CD8-positive, alpha-beta T cell (primary cell): ENCODE measurements at regions of chr7 and their contacts with region 1.

Region 1: DNA sequence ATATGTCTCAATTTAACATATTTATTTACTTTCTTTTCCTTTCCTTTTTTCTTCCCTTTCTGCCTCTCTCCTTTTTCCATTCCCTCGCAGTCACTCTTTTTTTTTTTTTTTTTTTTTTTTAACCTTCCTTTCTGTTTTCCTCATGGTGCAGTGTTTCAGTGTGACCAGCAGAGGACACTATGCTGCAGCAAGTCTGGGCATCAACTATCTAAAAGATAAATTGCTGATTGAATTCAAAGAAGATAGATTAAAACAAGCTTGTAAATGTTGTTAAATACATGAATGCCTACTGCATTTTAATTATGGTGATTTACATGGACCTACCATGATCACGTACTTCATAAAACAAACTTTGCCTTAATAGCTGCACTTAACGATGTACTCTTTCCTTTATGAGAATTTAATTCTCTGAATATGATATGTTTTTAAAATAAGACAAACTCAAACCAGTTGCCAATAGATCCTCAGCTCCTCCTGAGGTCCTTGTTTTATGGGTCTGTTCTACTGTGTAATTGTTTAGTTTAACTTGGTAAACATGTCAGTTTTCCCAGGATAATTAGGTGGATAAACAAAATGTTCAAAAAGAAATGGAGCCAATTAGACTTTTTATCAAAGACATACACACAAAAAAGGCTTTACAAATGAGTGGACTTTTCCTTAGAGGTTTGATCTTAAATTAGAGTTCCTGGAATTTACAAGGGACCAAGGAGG is 101.0 kb upstream of the AGR3 start:
- DNase-seq: peak in 4 of 9 experiments; percentile 6 to 65 (median 36)
- ATAC-seq: peak; percentile 69
- H3K4me3 ChIP-seq: no peak overlapping the region
- H3K4me3 Mint-ChIP-seq: no peak overlapping the region
- H3K27ac ChIP-seq: no peak overlapping the region
- H3K27ac Mint-ChIP-seq: no peak overlapping the region
- H3K4me1 ChIP-seq: no peaks in the 10 kb centered on the region
- H3K4me1 Mint-ChIP-seq: peaks cover 2% of the 10 kb centered on the region
- H3K27me3 ChIP-seq: peaks cover 0 to 2% of the 10 kb centered on the region in 2 experiments
- H3K27me3 Mint-ChIP-seq: peaks cover 11% of the 10 kb centered on the region
- CTCF ChIP-seq: peak; percentile 99

Region 2: GRCh38 chr7:17041324-17041723 is 58.5 kb after region 1 on chr7:
- CTCF ChIA-PET with region 1: no interaction called
- POLR2A ChIA-PET with region 1: no interaction called
- intact Hi-C with region 1: no loop called
- DNase-seq: peak in 2 of 9 experiments; percentile 6 to 13
- ATAC-seq: no peak
- H3K4me3 ChIP-seq: no peak overlapping the region
- H3K4me3 Mint-ChIP-seq: no peak overlapping the region
- H3K27ac ChIP-seq: no peak overlapping the region
- H3K27ac Mint-ChIP-seq: no peak overlapping the region
- H3K4me1 ChIP-seq: no peaks in the 10 kb centered on the region
- H3K4me1 Mint-ChIP-seq: peaks cover 8% of the 10 kb centered on the region
- H3K27me3 ChIP-seq: no peaks in the 10 kb centered on the region
- H3K27me3 Mint-ChIP-seq: peaks cover 2% of the 10 kb centered on the region
- CTCF ChIP-seq: no peak

Region 3: GRCh38 chr7:17530741-17531417 is 548.1 kb after region 1 on chr7:
- CTCF ChIA-PET with region 1: interaction called, 3 read pairs
- POLR2A ChIA-PET with region 1: no interaction called
- intact Hi-C with region 1: loop called (anchors 2 to 5 kb)
- DNase-seq: peak in 2 of 9 experiments; percentile 2 to 13
- ATAC-seq: no peak
- H3K4me3 ChIP-seq: no peak overlapping the region
- H3K4me3 Mint-ChIP-seq: no peak overlapping the region
- H3K27ac ChIP-seq: no peak overlapping the region
- H3K27ac Mint-ChIP-seq: no peak overlapping the region
- H3K4me1 ChIP-seq: no peaks in the 10 kb centered on the region
- H3K4me1 Mint-ChIP-seq: no peaks in the 10 kb centered on the region
- H3K27me3 ChIP-seq: no peaks in the 10 kb centered on the region
- H3K27me3 Mint-ChIP-seq: peaks cover 6% of the 10 kb centered on the region
- CTCF ChIP-seq: no peak

Region 4: DNA sequence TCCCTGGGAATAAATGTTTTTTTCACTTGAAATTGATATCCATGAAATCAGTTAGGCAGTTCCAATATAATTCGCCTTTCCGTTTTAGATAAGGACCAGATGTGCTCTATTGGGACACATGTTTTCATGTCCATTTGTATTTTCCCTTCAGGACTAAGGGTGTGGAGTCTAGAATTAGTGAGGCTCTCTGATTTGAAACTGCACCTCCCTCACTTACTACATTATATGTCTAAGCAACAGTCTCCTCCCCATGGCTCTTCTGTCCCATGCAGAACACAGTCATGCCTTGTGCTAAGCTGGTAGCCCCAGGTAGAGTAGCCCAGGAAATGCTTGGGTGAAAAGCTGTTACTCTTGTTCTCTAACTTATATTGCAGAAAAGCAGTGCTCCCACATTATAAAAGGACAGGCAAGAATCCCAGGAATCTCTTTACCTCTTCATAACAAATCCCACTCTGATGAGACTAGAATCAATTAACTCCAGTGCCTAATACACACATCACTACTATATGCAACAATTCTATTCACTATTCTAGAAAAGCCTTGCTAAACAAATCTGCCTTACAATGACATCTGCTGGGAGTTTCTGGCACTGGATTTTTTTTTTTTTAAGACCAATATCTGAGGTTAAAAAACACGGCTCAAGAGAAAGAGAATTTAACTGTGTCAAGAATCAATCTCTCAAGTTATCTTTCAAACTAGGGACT is 663.6 kb after region 1 on chr7:
- CTCF ChIA-PET with region 1: no interaction called
- POLR2A ChIA-PET with region 1: no interaction called
- intact Hi-C with region 1: loop called (anchors 5 kb)
- DNase-seq: no peak
- ATAC-seq: no peak
- H3K4me3 ChIP-seq: no peak overlapping the region
- H3K4me3 Mint-ChIP-seq: no peak overlapping the region
- H3K27ac ChIP-seq: no peak overlapping the region
- H3K27ac Mint-ChIP-seq: no peak overlapping the region
- H3K4me1 ChIP-seq: no peaks in the 10 kb centered on the region
- H3K4me1 Mint-ChIP-seq: no peaks in the 10 kb centered on the region
- H3K27me3 ChIP-seq: no peaks in the 10 kb centered on the region
- H3K27me3 Mint-ChIP-seq: peaks cover 19% of the 10 kb centered on the region
- CTCF ChIP-seq: no peak